H1 (cell line): ENCODE measurements at regions of chr2 and their contacts with region 1.

Region 1: DNA sequence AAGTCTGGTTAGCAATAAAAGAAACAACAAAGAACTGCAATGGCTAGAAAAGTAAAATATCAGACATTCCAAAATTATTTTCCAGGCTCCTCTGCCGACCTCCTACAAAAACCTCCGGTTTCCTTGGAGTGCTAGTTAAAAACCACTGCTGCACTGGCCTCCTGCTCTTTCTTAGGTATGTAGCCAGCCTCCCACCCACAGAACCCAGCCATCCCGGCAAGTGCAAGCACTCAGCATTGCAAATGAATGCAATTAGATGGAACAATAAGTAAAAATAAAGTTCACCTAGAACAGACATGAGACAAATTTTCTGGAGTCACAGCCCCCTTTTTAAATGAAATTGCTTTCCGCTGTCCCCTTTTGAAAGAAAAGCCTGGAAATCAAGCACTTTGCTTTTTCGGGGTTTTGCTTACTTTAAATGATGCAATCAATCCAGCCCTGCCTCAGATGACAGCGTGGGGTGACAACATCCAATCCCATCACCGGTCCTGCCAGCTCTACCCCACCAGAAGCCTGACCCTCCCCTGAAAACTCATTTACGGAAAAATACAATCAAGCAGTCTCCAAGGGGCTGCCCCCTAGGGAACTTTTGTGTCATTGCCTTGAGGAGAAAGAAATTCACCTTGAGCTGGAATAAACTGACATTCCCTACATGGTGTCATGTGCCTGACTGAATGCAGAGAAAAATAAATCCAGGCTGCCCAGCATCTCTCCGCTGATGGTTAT is 199.8 kb downstream of the EPHA4 start:
- DNase-seq: peak; percentile 9 to 51
- H3K4me3 ChIP-seq: peak overlapping the region in 2 of 4 experiments; percentile 19 to 41; a peak in 5 of 8 replicates
- H3K27ac ChIP-seq: no peak overlapping the region
- H3K4me1 ChIP-seq: peaks cover 4 to 12% (median 11%) of the 10 kb centered on the region in 4 experiments
- H3K27me3 ChIP-seq: no peaks in the 10 kb centered on the region; a peak in 1 of 7 replicates
- CTCF ChIP-seq: peak in 2 of 3 experiments; percentile 43 to 65; a peak in 3 of 4 replicates
- EP300 ChIP-seq: no peak
- POLR2A ChIP-seq: no peak
- RAD21 ChIP-seq: peak; percentile 51 to 62

Region 2: GRCh38 chr2:221360742-221361141 is 11.6 kb before region 1 on chr2:
- CTCF ChIA-PET with region 1: interaction called, 23 read pairs
- POLR2A ChIA-PET with region 1: no interaction called
- DNase-seq: no peak
- H3K4me3 ChIP-seq: no peak overlapping the region
- H3K27ac ChIP-seq: no peak overlapping the region
- H3K4me1 ChIP-seq: no peaks in the 10 kb centered on the region; a peak in 1 of 7 replicates
- H3K27me3 ChIP-seq: no peaks in the 10 kb centered on the region
- CTCF ChIP-seq: no peak
- EP300 ChIP-seq: no peak
- POLR2A ChIP-seq: no peak
- RAD21 ChIP-seq: no peak

Region 3: GRCh38 chr2:221410487-221410886 is 38.2 kb after region 1 on chr2:
- CTCF ChIA-PET with region 1: no interaction called
- POLR2A ChIA-PET with region 1: no interaction called
- DNase-seq: no peak
- H3K4me3 ChIP-seq: no peak overlapping the region
- H3K27ac ChIP-seq: no peak overlapping the region
- H3K4me1 ChIP-seq: no peaks in the 10 kb centered on the region
- H3K27me3 ChIP-seq: no peaks in the 10 kb centered on the region; a peak in 1 of 7 replicates
- CTCF ChIP-seq: no peak
- EP300 ChIP-seq: no peak
- POLR2A ChIP-seq: no peak
- RAD21 ChIP-seq: no peak